ENCODE measurements at regions of chr2 and their contacts with region 1.

Region 1: DNA sequence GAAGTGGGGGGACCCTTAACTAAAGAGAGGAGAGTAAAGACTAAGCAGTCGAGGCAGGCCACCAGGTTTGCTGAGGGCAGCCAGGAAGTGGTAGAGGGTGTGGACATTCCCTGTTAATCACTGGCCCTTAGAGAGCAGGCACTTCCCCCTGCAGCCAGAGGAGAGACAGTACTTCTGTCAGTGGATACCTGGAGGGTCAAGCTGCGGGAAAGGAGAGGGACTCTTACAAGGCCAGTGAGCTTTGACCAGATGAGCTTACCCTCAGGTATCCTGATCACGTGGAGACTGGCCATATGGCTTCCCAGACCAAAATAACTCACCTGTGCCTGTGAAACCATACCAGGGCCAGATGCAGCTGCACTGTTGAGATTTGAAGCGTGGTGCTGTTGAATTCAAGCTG is 28.6 kb downstream of the ITGA6 start:
- DNase-seq: no peak
- ATAC-seq: no peak
- H3K4me3 Mint-ChIP-seq: peak overlapping the region in 5 of 10 donors; percentile 10 to 70 (median 43)
- H3K27ac Mint-ChIP-seq: peak overlapping the region; percentile 23 to 90 (median 78)
- H3K4me1 Mint-ChIP-seq: peaks cover 60 to 95% (median 91%) of the 10 kb centered on the region in 4 donors
- H3K27me3 Mint-ChIP-seq: no peaks in the 10 kb centered on the region

Region 2: DNA sequence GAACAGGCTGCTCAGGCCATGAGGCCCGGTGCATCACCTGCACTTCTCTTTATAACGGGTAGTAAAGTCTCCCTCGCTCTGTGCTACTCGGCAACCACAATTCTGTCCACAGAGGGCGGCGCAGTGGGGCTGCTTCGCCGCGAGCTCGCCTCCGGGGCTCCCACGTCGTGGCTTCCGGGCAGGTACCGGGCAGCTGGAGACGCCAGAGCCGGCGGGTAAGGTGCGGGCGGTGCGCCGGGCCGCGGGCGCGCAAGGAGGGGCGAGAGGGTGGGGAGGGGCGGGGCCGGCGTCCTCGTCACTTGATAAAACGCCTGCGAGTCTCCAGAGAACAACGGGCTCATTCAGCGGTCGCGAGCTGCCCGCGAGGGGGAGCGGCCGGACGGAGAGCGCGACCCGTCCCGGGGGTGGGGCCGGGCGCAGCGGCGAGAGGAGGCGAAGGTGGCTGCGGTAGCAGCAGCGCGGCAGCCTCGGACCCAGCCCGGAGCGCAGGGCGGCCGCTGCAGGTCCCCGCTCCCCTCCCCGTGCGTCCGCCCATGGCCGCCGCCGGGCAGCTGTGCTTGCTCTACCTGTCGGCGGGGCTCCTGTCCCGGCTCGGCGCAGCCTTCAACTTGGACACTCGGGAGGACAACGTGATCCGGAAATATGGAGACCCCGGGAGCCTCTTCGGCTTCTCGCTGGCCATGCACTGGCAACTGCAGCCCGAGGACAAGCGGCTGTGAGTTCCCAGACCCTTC is 28.6 kb before region 1 on chr2 and contains the start of gene ITGA6:
- POLR2A ChIA-PET with region 1: interaction called, 304 read pairs
- DNase-seq: peak; percentile 54 to 86 (median 76)
- ATAC-seq: peak; percentile 70 to 74
- H3K4me3 Mint-ChIP-seq: peak within 1 kb of the TSS in 9 of 10 donors; percentile 90 to 99 (median 97)
- H3K27ac Mint-ChIP-seq: peak within 1 kb of the TSS; percentile 73 to 96 (median 93)
- H3K4me1 Mint-ChIP-seq: peaks cover 25 to 34% (median 28%) of the 10 kb centered on the region in 4 donors
- H3K27me3 Mint-ChIP-seq: no peaks in the 10 kb centered on the region
- polyA plus RNA-seq, gene ITGA6: 58.4 to 80.0 (median 64.2) TPM

Region 3: GRCh38 chr2:172434821-172435605 is 21.0 kb before region 1 on chr2:
- POLR2A ChIA-PET with region 1: interaction called, 304 read pairs
- DNase-seq: peak in 9 of 10 donors; percentile 19 to 89 (median 74)
- ATAC-seq: peak; percentile 83 to 90
- H3K4me3 Mint-ChIP-seq: peak overlapping the region in 8 of 10 donors; percentile 43 to 99 (median 82)
- H3K27ac Mint-ChIP-seq: peak overlapping the region in 4 of 10 donors; percentile 85 to 94 (median 88)
- H3K4me1 Mint-ChIP-seq: peaks cover 0 to 53% (median 3%) of the 10 kb centered on the region in 4 donors
- H3K27me3 Mint-ChIP-seq: no peaks in the 10 kb centered on the region

Region 4: GRCh38 chr2:172442072-172442895 is 13.7 kb before region 1 on chr2:
- POLR2A ChIA-PET with region 1: interaction called, 91 read pairs
- DNase-seq: peak in 8 of 10 donors; percentile 24 to 67 (median 58)
- ATAC-seq: peak; percentile 49 to 64
- H3K4me3 Mint-ChIP-seq: peak overlapping the region; percentile 77 to 95 (median 88)
- H3K27ac Mint-ChIP-seq: peak overlapping the region; percentile 30 to 98 (median 88)
- H3K4me1 Mint-ChIP-seq: peaks cover 17 to 57% (median 45%) of the 10 kb centered on the region in 4 donors
- H3K27me3 Mint-ChIP-seq: no peaks in the 10 kb centered on the region

Measured in naive thymus-derived CD8-positive, alpha-beta T cell (primary cell).